Mammary epithelial cell (primary cell): ENCODE measurements at regions of chr10 and their contacts with region 1.

Region 1: GRCh38 chr10:66783316-66783715 is 142.5 kb upstream of the LRRTM3 start:
- DNase-seq: peak; percentile 21
- H3K4me3 ChIP-seq: no peak overlapping the region
- H3K27ac ChIP-seq: no peak overlapping the region
- H3K4me1 ChIP-seq: no peaks in the 10 kb centered on the region
- H3K27me3 ChIP-seq: peaks cover 2% of the 10 kb centered on the region
- CTCF ChIP-seq: no peak

Region 2: GRCh38 chr10:66678521-66678920 is 104.8 kb before region 1 on chr10:
- CTCF ChIA-PET with region 1: no interaction called
- dilution Hi-C with region 1: loop called (anchors 5 kb)
- in situ Hi-C with region 1: no loop called
- intact Hi-C with region 1: no loop called
- DNase-seq: peak; percentile 66
- H3K4me3 ChIP-seq: no peak overlapping the region
- H3K27ac ChIP-seq: peak overlapping the region; percentile 56
- H3K4me1 ChIP-seq: peaks cover 32% of the 10 kb centered on the region
- H3K27me3 ChIP-seq: no peaks in the 10 kb centered on the region
- CTCF ChIP-seq: no peak

Region 3: DNA sequence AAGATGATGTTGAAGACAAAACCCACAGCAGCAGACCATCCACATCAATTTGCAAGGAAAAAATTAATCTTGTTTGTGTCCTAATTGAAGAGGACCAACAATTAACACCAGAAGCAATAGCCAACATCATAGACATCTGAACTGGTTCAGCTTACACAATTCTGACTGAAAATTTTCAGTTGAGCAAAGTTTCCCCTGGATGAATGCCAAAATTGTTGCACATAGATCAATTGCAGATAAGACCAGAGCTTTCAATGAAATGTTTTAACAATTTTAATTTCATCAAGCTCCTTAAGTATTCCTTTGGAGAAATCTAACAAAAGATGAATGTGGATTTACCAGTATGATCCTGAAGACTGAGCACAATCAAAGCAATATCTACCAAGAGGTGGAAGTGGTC is 744.0 kb after region 1 on chr10:
- CTCF ChIA-PET with region 1: no interaction called
- dilution Hi-C with region 1: no loop called
- in situ Hi-C with region 1: no loop called
- intact Hi-C with region 1: no loop called
- DNase-seq: no peak
- H3K4me3 ChIP-seq: no peak overlapping the region
- H3K27ac ChIP-seq: no peak overlapping the region
- H3K4me1 ChIP-seq: no peaks in the 10 kb centered on the region
- H3K27me3 ChIP-seq: no peaks in the 10 kb centered on the region
- CTCF ChIP-seq: no peak